ENCODE measurements at regions of chr16 and their contacts with region 1.

Region 1: GRCh38 chr16:56681939-56682702 is at the start of gene MT1X:
- DNase-seq: peak; percentile 98
- ATAC-seq: peak; percentile 96
- total RNA-seq, gene MT1X: 85.9 TPM

Region 2: DNA sequence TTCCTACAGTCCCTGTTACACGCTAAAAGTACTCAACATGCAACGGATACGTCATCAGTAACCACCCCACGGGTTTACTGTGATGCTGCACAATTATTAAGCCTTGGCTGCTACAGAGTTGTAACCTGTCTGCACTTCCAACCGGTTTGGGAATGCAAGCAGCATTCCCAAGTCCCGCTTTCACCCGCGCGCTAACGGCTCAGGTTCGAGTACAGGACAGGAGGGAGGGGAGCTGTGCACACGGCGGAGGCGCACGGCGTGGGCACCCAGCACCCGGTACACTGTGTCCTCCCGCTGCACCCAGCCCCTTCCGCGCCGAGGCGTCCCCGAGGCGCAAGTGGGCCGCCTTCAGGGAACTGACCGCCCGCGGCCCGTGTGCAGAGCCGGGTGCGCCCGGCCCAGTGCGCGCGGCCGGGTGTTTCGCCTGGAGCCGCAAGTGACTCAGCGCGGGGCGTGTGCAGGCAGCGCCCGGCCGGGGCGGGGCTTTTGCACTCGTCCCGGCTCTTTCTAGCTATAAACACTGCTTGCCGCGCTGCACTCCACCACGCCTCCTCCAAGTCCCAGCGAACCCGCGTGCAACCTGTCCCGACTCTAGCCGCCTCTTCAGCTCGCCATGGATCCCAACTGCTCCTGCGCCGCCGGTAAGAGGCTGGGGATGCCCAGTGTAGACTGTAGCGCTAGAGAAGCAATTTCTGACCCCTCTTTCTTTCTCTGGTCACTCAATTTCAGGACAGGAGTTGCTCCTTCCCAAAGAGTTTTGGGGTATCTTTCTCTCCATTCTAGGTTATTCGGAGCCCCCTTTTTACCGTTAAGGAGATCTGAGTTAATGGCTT is 73.9 kb before region 1 on chr16 and contains the start of gene MT2A:
- intact Hi-C with region 1: loop called (anchors 10 kb)
- DNase-seq: peak; percentile 98
- ATAC-seq: peak; percentile 84
- total RNA-seq, gene MT2A: 86.3 TPM